ENCODE measurements at regions of chr14 and their contacts with region 1.

Region 1: DNA sequence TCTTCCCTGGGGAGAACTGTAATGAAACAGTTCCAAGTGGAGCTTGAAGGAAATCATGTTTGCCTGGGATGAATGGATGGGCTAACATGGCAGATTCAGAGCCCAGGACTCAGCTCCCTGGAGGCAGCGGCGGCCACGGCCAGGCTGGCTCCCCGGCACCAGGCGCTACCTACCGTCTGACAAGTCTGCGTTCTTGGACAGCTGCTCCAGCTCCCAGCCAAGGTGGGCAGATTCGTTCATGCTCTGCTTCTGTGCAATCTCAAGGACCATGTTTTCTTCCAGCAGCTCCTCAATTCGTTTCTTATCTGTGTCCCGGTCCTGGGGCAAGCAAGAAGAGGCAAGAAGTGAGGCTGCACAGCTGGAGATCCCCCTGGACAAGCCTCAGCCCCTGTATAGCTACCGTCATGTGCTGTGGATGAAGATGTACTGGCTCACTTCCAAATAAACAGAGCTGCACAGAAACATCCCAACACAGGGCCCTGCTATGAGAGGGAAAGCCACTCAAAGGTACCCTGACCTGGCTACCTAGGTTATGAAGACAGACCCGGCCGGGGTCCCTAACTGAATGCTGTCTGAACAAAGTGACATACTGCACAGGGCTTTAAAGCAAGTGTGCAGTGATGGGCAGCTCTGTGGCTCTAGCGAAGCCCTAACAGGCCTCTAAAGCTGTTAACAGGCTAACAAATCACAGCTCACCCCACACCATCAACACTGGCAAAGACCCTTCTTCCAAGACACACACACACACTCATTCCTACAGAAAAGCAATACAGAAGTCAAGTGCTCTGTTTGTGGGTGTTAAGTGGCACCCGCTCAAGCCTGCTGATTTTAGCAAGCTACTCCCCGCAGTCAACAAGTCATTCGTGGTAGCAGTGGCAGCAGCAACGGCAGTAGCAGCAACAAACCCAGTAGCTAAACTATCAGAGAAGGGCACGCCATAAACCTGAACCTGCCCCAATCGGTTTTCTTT is 80.4 kb upstream of the GPR68 start:
- DNase-seq: peak in 1 of 2 donors; percentile 18
- H3K4me3 ChIP-seq: no peak overlapping the region
- H3K27ac ChIP-seq: peak overlapping the region in 2 of 3 donors; percentile 50 to 59
- H3K4me1 ChIP-seq: peaks cover 0 to 19% of the 10 kb centered on the region in 2 donors
- H3K27me3 ChIP-seq: no peaks in the 10 kb centered on the region
- CTCF ChIP-seq: no peak
- POLR2A ChIP-seq: no peak

Region 2: DNA sequence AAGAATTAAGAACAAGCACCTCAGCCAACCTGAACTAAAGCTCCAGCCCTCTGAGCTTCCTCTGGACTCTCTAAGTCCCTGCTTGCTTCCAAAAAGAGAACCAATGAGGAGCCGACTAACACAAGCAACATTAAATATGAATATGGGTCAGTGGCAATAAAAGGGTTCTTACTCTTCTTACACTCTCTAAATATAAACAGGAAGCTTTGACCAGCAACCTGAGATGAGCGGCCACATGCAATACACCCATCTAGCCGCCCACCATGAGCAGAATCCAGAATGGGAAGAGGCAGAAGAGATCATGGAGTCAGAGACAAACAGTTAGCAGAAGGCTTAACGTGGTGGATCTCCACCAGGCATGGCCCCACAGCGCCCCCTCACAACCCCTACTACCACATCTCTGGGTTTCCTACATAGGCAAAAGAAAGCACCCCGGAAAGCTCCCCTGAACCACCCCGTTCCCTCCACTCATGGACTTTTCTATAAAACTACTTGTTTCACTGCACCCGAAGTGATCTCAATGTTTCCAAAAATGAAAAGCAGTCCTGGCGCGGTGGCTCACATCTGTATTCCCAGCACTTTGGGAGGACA is 568.0 kb before region 1 on chr14:
- intact Hi-C with region 1: no loop called
- DNase-seq: no peak
- H3K4me3 ChIP-seq: no peak overlapping the region
- H3K27ac ChIP-seq: no peak overlapping the region
- H3K4me1 ChIP-seq: peaks cover 5 to 15% of the 10 kb centered on the region in 2 donors
- H3K27me3 ChIP-seq: no peaks in the 10 kb centered on the region
- CTCF ChIP-seq: no peak
- POLR2A ChIP-seq: no peak

Region 3: GRCh38 chr14:91264151-91265150 is 60.4 kb before region 1 on chr14:
- intact Hi-C with region 1: no loop called
- DNase-seq: peak in 1 of 2 donors; percentile 19
- H3K4me3 ChIP-seq: peak overlapping the region in 1 of 3 donors; percentile 12
- H3K27ac ChIP-seq: no peak overlapping the region
- H3K4me1 ChIP-seq: peaks cover 0 to 12% of the 10 kb centered on the region in 2 donors
- H3K27me3 ChIP-seq: no peaks in the 10 kb centered on the region
- CTCF ChIP-seq: no peak
- POLR2A ChIP-seq: no peak

Region 4: GRCh38 chr14:91418387-91419043 is 93.6 kb after region 1 on chr14:
- intact Hi-C with region 1: loop called (anchors 5 kb)
- DNase-seq: peak; percentile 41 to 44
- H3K4me3 ChIP-seq: peak overlapping the region in 1 of 3 donors; percentile 28
- H3K27ac ChIP-seq: peak overlapping the region in 1 of 3 donors; percentile 9
- H3K4me1 ChIP-seq: peaks cover 7 to 17% of the 10 kb centered on the region in 2 donors
- H3K27me3 ChIP-seq: no peaks in the 10 kb centered on the region
- CTCF ChIP-seq: peak; percentile 77 to 98 (median 93)
- POLR2A ChIP-seq: no peak